Mammary epithelial cell (primary cell): ENCODE measurements at regions of chr16 and their contacts with region 1.

Region 1: GRCh38 chr16:89525146-89525913 is 17.1 kb downstream of the SPG7 start:
- DNase-seq: no peak
- H3K4me3 ChIP-seq: no peak overlapping the region
- H3K27ac ChIP-seq: no peak overlapping the region
- H3K4me1 ChIP-seq: no peaks in the 10 kb centered on the region
- H3K27me3 ChIP-seq: no peaks in the 10 kb centered on the region
- CTCF ChIP-seq: no peak

Region 2: DNA sequence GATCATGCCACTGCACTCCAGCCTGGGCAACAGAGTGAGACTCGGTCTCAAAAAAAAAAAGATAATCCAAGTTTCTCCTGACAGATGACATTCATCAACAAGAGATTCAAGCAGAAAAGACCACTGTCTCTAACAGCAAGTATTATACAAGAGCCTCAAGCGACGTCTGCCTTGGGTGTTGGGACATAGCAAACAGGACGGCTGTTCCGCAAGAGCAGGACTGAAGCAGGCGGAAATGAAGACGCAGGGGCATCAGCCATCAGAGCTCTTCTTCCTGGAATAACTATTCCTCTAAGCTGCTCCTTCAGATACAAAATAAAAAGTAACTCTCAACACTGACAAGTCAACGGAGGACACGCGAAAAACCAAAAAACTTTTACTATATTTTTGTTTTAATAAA is 89.0 kb before region 1 on chr16:
- CTCF ChIA-PET with region 1: no interaction called
- dilution Hi-C with region 1: loop called (anchors 5 kb)
- in situ Hi-C with region 1: no loop called
- intact Hi-C with region 1: no loop called
- DNase-seq: no peak
- H3K4me3 ChIP-seq: no peak overlapping the region
- H3K27ac ChIP-seq: no peak overlapping the region
- H3K4me1 ChIP-seq: no peaks in the 10 kb centered on the region
- H3K27me3 ChIP-seq: no peaks in the 10 kb centered on the region
- CTCF ChIP-seq: no peak